Left cardiac atrium (tissue), 4 donors: ENCODE measurements at regions of chr7 and their contacts with region 1.

Region 1: GRCh38 chr7:89622838-89623672 is 531.2 kb upstream of the STEAP1 start:
- DNase-seq: no peak
- ATAC-seq: peak; percentile 65 to 70

Region 2: GRCh38 chr7:88243345-88243909 is 1379.6 kb before region 1 on chr7:
- intact Hi-C with region 1: loop called in 1 of 2 experiments (anchors 5 kb)
- DNase-seq: no peak
- ATAC-seq: peak; percentile 79 to 88

Region 3: DNA sequence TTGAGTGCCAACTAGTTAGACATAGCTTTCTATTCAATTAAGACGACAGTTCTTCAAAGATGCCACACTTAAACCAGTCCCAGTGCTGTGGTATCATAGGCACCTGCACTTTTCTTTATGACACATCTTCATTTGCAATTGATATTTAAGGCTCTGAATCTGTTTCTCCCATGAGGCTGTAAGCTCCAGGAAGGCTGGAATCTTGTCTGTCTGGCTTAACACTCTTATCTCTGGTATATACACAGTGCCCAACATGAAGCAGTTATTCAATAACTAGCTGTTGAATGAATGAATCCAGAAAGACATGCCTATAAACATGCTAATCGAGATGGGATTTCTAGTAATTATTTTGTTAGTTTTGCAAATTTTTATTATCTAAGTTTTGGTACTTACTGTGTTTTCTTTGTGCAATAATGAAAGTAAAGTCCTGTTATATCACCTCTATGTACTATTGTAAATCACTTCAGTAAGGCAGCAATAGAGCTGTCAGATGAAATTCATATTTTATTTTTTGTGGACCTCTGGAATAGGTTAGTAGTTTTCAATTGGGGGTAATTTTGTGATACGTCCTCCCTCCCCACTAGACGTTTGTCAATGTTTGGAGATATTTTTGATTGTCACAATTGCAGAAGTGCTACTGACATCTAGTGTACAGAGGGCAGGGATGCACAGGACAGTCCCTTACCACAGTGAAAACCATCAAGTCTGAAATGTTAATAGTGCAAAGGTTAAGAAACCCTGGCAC is 1265.1 kb before region 1 on chr7:
- intact Hi-C with region 1: loop called in 1 of 2 experiments (anchors 10 kb)
- DNase-seq: no peak
- ATAC-seq: peak; percentile 61 to 86

Region 4: DNA sequence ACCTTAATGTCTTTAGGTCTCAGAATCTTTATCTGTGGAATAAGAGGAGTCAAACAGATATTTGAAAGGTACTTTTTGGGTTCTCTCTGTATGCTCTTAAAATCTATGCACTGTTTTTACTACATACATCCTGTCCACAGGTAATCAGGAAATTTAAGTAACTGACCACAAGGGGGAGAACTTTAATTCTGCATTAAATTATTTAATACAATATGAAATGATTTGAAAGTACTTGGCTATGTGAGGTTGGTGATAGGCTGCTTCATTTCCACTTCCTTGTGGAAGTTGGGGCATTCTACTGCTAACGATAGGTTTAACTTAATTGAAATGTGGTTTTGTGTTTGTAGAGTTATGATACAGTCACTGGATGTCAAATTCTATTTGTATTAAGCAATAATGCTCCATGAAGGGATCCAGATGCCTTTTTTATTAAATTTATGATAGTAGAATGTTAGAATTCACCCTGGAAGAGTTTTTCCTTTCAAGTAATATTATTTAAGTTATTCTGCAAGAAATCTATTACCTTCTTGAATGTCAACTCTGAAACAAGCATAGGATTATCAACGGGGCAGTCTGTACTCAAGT is 833.5 kb before region 1 on chr7:
- intact Hi-C with region 1: loop called in 1 of 2 experiments (anchors 5 kb)
- DNase-seq: no peak
- ATAC-seq: no peak